CD8-positive, alpha-beta T cell (primary cell): ENCODE measurements at regions of chr2 and their contacts with region 1.

Region 1: GRCh38 chr2:85538486-85539360 is at the start of gene MAT2A:
- DNase-seq: peak; percentile 71 to 96 (median 87)
- ATAC-seq: peak; percentile 77
- H3K4me3 ChIP-seq: peak within 1 kb of the TSS; percentile 96
- H3K4me3 Mint-ChIP-seq: peak within 1 kb of the TSS; percentile 94
- H3K27ac ChIP-seq: peak within 1 kb of the TSS; percentile 87 to 91
- H3K27ac Mint-ChIP-seq: peak within 1 kb of the TSS; percentile 93
- H3K4me1 ChIP-seq: peaks cover 28% of the 10 kb centered on the region
- H3K4me1 Mint-ChIP-seq: peaks cover 47% of the 10 kb centered on the region
- H3K27me3 ChIP-seq: no peaks in the 10 kb centered on the region
- H3K27me3 Mint-ChIP-seq: no peaks in the 10 kb centered on the region
- CTCF ChIP-seq: no peak
- total RNA-seq, gene MAT2A: 105 to 107 TPM

Region 2: GRCh38 chr2:84970868-84971509 is 567.7 kb before region 1 on chr2 and contains the start of gene KCMF1:
- CTCF ChIA-PET with region 1: no interaction called
- POLR2A ChIA-PET with region 1: no interaction called
- intact Hi-C with region 1: loop called in 1 of 2 experiments (anchors 2 kb)
- DNase-seq: peak; percentile 26 to 80 (median 69)
- ATAC-seq: peak; percentile 52
- H3K4me3 ChIP-seq: peak within 1 kb of the TSS; percentile 66 to 75
- H3K4me3 Mint-ChIP-seq: peak within 1 kb of the TSS; percentile 92
- H3K27ac ChIP-seq: peak within 1 kb of the TSS; percentile 74 to 78
- H3K27ac Mint-ChIP-seq: peak within 1 kb of the TSS; percentile 97
- H3K4me1 ChIP-seq: peaks cover 51% of the 10 kb centered on the region
- H3K4me1 Mint-ChIP-seq: peaks cover 61% of the 10 kb centered on the region
- H3K27me3 ChIP-seq: no peaks in the 10 kb centered on the region
- H3K27me3 Mint-ChIP-seq: no peaks in the 10 kb centered on the region
- CTCF ChIP-seq: no peak
- total RNA-seq, gene KCMF1: 85.3 to 89.5 TPM

Region 3: GRCh38 chr2:85354286-85355072 is 184.2 kb before region 1 on chr2 and contains the starts of genes ELMOD3 and RETSAT:
- CTCF ChIA-PET with region 1: no interaction called
- POLR2A ChIA-PET with region 1: interaction called, 32 read pairs
- intact Hi-C with region 1: loop called (anchors 1 to 2 kb)
- DNase-seq: peak; percentile 92 to 99 (median 95)
- ATAC-seq: peak; percentile 98
- H3K4me3 ChIP-seq: peak within 1 kb of the TSS; percentile 85 to 94
- H3K4me3 Mint-ChIP-seq: peak within 1 kb of the TSS; percentile 100
- H3K27ac ChIP-seq: peak within 1 kb of the TSS; percentile 82 to 92
- H3K27ac Mint-ChIP-seq: peak within 1 kb of the TSS; percentile 100
- H3K4me1 ChIP-seq: peaks cover 31% of the 10 kb centered on the region
- H3K4me1 Mint-ChIP-seq: peaks cover 51% of the 10 kb centered on the region
- H3K27me3 ChIP-seq: no peaks in the 10 kb centered on the region
- H3K27me3 Mint-ChIP-seq: no peaks in the 10 kb centered on the region
- CTCF ChIP-seq: no peak
- total RNA-seq, gene ELMOD3: 10.8 to 12.1 TPM
- total RNA-seq, gene RETSAT: 19.0 to 19.6 TPM

Region 4: DNA sequence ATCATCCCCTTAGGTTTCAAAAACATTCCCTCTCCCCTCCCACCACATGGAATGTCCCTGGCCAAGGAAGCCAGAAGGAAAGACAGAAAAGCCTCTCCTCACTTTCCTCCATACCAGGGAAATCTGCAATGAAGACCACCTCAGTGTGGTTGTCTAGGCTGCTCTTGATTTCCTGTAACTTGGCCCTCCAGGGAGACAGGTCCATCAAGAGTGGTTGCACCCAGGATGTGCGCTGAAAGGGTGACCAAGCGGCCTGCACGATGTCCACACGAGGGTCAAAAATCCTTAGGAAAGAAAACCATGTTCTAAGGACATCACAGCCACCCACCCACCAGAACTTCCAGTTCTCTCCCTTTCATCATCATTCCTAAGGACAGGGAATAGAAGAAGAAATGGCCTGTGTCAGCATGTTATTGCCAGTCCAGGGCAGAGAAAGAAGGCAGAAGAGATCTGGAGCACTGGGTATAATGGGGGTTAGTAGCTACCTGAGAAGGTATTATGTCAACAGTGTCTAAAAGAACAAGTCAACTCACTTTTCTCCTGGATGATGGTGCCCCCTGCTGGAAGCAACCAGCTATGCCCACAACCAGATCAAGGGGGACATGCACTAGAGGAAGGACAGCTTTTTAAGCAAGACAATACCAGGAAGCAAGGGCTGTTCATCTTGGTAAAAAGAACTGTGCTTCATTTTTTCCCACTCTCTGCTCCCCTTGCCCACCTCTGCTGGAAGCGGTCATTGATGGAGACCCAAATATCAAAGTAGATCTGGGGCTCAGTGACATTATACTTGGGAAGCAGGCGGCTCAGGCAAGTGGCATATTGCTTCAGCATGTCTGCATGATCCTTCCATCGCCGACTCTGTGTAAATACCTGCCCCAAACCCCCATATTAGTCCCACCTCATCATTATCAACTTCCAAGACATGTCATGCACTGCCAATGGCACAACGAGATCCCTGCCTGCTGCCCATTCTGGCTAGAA is 13.3 kb after region 1 on chr2:
- CTCF ChIA-PET with region 1: interaction called, 115 read pairs
- POLR2A ChIA-PET with region 1: interaction called, 78 read pairs
- intact Hi-C with region 1: loop called in 1 of 2 experiments (anchors 1 kb)
- DNase-seq: peak; percentile 83 to 94 (median 88)
- ATAC-seq: peak; percentile 100
- H3K4me3 ChIP-seq: no peak overlapping the region
- H3K4me3 Mint-ChIP-seq: no peak overlapping the region
- H3K27ac ChIP-seq: no peak overlapping the region
- H3K27ac Mint-ChIP-seq: no peak overlapping the region
- H3K4me1 ChIP-seq: no peaks in the 10 kb centered on the region
- H3K4me1 Mint-ChIP-seq: peaks cover 4% of the 10 kb centered on the region
- H3K27me3 ChIP-seq: no peaks in the 10 kb centered on the region
- H3K27me3 Mint-ChIP-seq: no peaks in the 10 kb centered on the region
- CTCF ChIP-seq: peak; percentile 87

Region 5: DNA sequence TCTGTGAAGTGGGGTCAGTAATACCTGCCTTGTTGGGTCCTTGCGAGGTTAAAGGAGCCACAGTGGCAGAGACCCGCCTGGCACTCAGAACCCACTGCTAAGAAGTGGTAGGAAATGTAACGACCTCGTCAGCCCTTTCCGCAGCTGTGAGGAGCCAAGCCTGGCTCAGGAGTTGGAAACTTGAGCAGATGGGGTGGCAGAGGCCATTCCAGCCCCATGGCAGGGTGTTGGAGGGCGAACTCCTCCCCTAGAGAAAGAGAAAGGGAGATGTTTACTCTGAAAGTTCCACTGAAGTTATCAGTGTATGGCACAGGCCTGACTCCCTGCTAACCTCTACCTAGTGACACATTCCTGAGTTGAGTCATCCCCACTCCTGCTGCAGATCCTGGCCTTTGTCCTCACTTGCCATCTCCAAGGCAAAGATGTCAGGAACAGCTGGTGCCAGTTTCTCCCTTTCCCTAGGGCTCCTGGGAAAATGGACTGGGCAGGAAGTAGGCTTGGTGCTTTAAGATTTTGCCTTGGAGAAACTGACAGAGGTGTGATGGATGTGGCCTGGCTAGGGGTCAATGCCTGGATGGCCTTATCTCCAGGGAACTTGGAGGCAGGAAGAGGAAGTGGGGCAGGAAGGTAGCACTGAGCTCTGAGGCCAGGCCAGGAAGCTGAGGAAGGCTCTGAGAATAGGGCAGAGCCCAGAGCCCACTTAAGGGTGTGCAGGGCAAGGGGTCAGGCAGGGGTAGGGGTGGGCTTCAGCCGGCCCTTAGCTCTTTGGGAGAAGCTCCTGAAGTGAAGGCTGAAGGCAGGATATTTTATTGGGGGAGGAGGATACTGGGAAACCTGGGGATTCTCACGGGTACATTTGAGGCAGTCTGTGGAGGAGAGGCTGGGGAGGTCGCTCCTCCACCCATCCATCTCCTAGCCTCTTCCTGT is 46.4 kb after region 1 on chr2:
- CTCF ChIA-PET with region 1: no interaction called
- POLR2A ChIA-PET with region 1: interaction called, 10 read pairs
- intact Hi-C with region 1: no loop called
- DNase-seq: peak in 4 of 9 experiments; percentile 19 to 60 (median 40)
- ATAC-seq: peak; percentile 45
- H3K4me3 ChIP-seq: peak overlapping the region; percentile 67 to 78
- H3K4me3 Mint-ChIP-seq: peak overlapping the region; percentile 90
- H3K27ac ChIP-seq: peak overlapping the region; percentile 54 to 76
- H3K27ac Mint-ChIP-seq: peak overlapping the region; percentile 94
- H3K4me1 ChIP-seq: peaks cover 33% of the 10 kb centered on the region
- H3K4me1 Mint-ChIP-seq: peaks cover 57% of the 10 kb centered on the region
- H3K27me3 ChIP-seq: no peaks in the 10 kb centered on the region
- H3K27me3 Mint-ChIP-seq: no peaks in the 10 kb centered on the region
- CTCF ChIP-seq: no peak

Region 6: GRCh38 chr2:85611705-85612587 is 73.2 kb after region 1 on chr2 and contains the start of gene C2orf68:
- CTCF ChIA-PET with region 1: no interaction called
- POLR2A ChIA-PET with region 1: interaction called, 18 read pairs
- intact Hi-C with region 1: loop called (anchors 1 to 2 kb)
- DNase-seq: peak; percentile 49 to 90 (median 83)
- ATAC-seq: peak; percentile 55
- H3K4me3 ChIP-seq: peak within 1 kb of the TSS; percentile 53 to 55
- H3K4me3 Mint-ChIP-seq: peak within 1 kb of the TSS; percentile 97
- H3K27ac ChIP-seq: peak within 1 kb of the TSS; percentile 61 to 70
- H3K27ac Mint-ChIP-seq: peak within 1 kb of the TSS; percentile 95
- H3K4me1 ChIP-seq: peaks cover 26% of the 10 kb centered on the region
- H3K4me1 Mint-ChIP-seq: peaks cover 39% of the 10 kb centered on the region
- H3K27me3 ChIP-seq: no peaks in the 10 kb centered on the region
- H3K27me3 Mint-ChIP-seq: no peaks in the 10 kb centered on the region
- CTCF ChIP-seq: no peak
- total RNA-seq, gene C2orf68: 23.2 to 27.9 TPM